Activated T-helper 1 cell treated with anti-CD3 and anti-CD28 coated beads, Interleukin-12 subunit alpha, Interleukin-12 subunit beta, Interleukin-2, Interleukin-4 antibody, amounts not matched to agents 30 ng/mL and 10 ng/mL and 1 ng/mL, durations not matched to agents 14 hours and 24 hours and 36 hours (primary cell): ENCODE measurements at regions of chr9 and their contacts with region 1.

Region 1: GRCh38 chr9:237858-238345 is 23.2 kb downstream of the DOCK8 start:
- DNase-seq: no peak
- H3K4me3 Mint-ChIP-seq: peak overlapping the region; percentile 35
- H3K27ac Mint-ChIP-seq: peak overlapping the region; percentile 32
- H3K4me1 Mint-ChIP-seq: peaks cover 52% of the 10 kb centered on the region
- H3K27me3 Mint-ChIP-seq: peaks cover 3% of the 10 kb centered on the region

Region 2: GRCh38 chr9:221989-222776 is 15.7 kb before region 1 on chr9:
- intact Hi-C with region 1: loop called (anchors 2 kb)
- DNase-seq: no peak
- H3K4me3 Mint-ChIP-seq: peak overlapping the region; percentile 2
- H3K27ac Mint-ChIP-seq: peak overlapping the region; percentile 73
- H3K4me1 Mint-ChIP-seq: peaks cover 42% of the 10 kb centered on the region
- H3K27me3 Mint-ChIP-seq: no peaks in the 10 kb centered on the region